ENCODE measurements at regions of chr7 and their contacts with region 1.

Region 1: DNA sequence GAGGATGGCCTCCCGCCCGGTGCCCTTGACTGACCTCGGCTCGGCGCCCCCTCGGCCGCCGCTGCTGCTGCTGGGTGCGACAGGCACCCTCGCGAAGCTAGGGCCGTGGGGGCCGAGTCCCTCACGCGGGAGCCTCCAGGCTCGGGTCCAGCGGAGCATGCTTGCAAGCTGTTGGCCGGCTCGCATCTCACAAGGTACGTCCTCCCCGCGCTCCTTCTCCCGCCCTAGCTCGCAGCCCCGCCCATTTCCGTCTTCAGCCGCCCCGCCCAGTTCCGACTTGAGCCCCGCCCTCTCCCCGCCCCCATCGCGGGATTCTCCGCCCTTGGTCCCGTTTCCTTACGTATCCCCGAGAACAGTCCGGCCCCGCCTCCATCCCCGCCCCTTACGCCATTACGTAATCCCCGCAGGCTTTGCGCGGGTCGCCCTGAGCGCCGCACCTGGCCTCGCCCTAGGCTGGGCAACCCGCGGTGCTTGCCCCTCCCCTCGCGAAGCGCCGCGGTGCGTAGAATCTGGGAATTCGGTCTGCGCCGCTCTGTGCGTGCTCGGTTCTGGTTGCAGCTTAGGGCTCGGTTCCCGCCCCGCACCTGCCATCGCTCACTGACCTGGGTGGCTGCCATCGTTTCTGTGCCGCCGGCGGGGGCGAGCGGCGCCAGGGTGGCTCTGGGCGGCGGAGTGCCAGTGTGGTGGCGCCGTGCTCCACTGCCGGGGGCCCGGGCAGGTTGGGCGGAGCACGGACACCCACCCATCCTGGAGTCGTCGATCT is at the start of gene ABHD11:
- DNase-seq: peak; percentile 95 to 99 (median 97)
- ATAC-seq: peak; percentile 95
- H3K4me3 ChIP-seq: peak within 1 kb of the TSS; percentile 84
- H3K4me3 Mint-ChIP-seq: peak within 1 kb of the TSS; percentile 83 to 94 (median 91)
- H3K27ac ChIP-seq: peak within 1 kb of the TSS; percentile 89
- H3K27ac Mint-ChIP-seq: peak within 1 kb of the TSS; percentile 79 to 96 (median 93)
- H3K4me1 ChIP-seq: peaks cover 4 to 18% of the 10 kb centered on the region in 2 donors
- H3K4me1 Mint-ChIP-seq: peaks cover 5 to 23% (median 16%) of the 10 kb centered on the region in 7 donors
- H3K27me3 ChIP-seq: no peaks in the 10 kb centered on the region
- H3K27me3 Mint-ChIP-seq: peaks cover 0 to 6% (median 0%) of the 10 kb centered on the region in 5 donors
- total RNA-seq, gene ABHD11: 12.3 to 22.7 (median 17.2) TPM

Region 2: DNA sequence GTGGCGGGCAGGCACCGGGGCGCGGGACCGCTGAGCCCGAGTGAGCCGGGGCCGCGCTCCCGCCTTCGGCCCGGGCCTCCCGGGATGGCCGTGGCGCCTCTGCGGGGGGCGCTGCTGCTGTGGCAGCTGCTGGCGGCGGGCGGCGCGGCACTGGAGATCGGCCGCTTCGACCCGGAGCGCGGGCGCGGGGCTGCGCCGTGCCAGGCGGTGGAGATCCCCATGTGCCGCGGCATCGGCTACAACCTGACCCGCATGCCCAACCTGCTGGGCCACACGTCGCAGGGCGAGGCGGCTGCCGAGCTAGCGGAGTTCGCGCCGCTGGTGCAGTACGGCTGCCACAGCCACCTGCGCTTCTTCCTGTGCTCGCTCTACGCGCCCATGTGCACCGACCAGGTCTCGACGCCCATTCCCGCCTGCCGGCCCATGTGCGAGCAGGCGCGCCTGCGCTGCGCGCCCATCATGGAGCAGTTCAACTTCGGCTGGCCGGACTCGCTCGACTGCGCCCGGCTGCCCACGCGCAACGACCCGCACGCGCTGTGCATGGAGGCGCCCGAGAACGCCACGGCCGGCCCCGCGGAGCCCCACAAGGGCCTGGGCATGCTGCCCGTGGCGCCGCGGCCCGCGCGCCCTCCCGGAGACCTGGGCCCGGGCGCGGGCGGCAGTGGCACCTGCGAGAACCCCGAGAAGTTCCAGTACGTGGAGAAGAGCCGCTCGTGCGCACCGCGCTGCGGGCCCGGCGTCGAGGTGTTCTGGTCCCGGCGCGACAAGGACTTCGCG is 304.7 kb before region 1 on chr7:
- CTCF ChIA-PET with region 1: no interaction called
- POLR2A ChIA-PET with region 1: no interaction called
- intact Hi-C with region 1: loop called in 1 of 2 experiments (anchors 2 kb)
- DNase-seq: peak in 1 of 9 donors; percentile 37
- ATAC-seq: peak; percentile 34
- H3K4me3 ChIP-seq: no peak overlapping the region
- H3K4me3 Mint-ChIP-seq: peak overlapping the region in 9 of 10 donors; percentile 28 to 78 (median 62)
- H3K27ac ChIP-seq: no peak overlapping the region
- H3K27ac Mint-ChIP-seq: no peak overlapping the region
- H3K4me1 ChIP-seq: no peaks in the 10 kb centered on the region
- H3K4me1 Mint-ChIP-seq: peaks cover 5 to 15% (median 10%) of the 10 kb centered on the region in 7 donors
- H3K27me3 ChIP-seq: no peaks in the 10 kb centered on the region
- H3K27me3 Mint-ChIP-seq: peaks cover 0 to 4% (median 0%) of the 10 kb centered on the region in 5 donors

Region 3: GRCh38 chr7:73578342-73579127 is 160.3 kb before region 1 on chr7 and contains the start of gene TBL2:
- CTCF ChIA-PET with region 1: interaction called, 3 read pairs
- POLR2A ChIA-PET with region 1: interaction called, 6 read pairs
- intact Hi-C with region 1: loop called (anchors 1 to 2 kb)
- DNase-seq: peak; percentile 98 to 99 (median 98)
- ATAC-seq: peak; percentile 94
- H3K4me3 ChIP-seq: peak within 1 kb of the TSS; percentile 61
- H3K4me3 Mint-ChIP-seq: peak within 1 kb of the TSS; percentile 91 to 98 (median 96)
- H3K27ac ChIP-seq: peak within 1 kb of the TSS; percentile 88
- H3K27ac Mint-ChIP-seq: peak within 1 kb of the TSS; percentile 97 to 99 (median 98)
- H3K4me1 ChIP-seq: peaks cover 13 to 14% of the 10 kb centered on the region in 2 donors
- H3K4me1 Mint-ChIP-seq: peaks cover 14 to 35% (median 31%) of the 10 kb centered on the region in 7 donors
- H3K27me3 ChIP-seq: no peaks in the 10 kb centered on the region
- H3K27me3 Mint-ChIP-seq: no peaks in the 10 kb centered on the region
- total RNA-seq, gene TBL2: 19.2 to 40.9 (median 32.8) TPM

Region 4: DNA sequence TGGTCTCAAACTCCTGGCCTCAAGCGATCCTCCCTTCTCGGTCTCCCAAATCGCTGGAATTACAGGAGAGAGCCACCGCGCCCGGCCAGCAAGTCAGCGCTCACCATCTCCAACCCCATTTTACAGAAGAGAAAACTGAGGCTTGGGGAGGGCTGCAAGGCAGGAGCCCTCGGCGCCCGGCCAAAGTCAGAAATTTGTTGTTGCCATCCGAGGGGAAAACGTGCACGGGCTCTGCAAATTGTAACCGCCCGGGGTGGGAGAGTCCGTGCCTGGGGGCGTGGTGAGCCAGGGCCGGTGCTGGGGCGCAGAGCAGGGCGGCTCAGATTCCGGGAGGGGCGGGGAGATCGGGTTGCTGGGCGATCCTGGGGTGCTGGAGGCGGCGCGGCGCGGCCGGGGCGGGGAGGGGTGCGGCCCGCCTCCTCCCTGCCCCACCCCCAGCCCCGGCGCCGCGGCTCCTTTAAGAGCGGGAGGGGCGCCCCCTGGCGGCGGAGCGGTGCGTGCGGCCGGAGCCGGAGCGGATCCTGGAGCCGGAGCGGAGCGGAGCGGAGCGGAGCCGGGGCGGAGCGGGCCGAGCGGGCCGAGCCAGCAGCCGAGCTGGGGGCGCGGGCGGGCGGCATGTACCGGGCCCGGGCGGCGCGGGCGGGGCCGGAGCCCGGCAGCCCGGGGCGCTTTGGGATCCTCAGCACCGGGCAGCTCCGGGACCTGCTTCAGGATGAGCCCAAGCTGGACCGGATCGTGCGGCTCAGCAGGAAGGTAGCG is 71.3 kb before region 1 on chr7 and contains the start of gene VPS37D:
- CTCF ChIA-PET with region 1: no interaction called
- POLR2A ChIA-PET with region 1: interaction called, 4 read pairs
- intact Hi-C with region 1: loop called (anchors 1 kb)
- DNase-seq: peak; percentile 84 to 99 (median 93)
- ATAC-seq: peak; percentile 98
- H3K4me3 ChIP-seq: peak within 1 kb of the TSS; percentile 44
- H3K4me3 Mint-ChIP-seq: peak within 1 kb of the TSS; percentile 61 to 84 (median 76)
- H3K27ac ChIP-seq: no peak within 1 kb of the TSS
- H3K27ac Mint-ChIP-seq: peak within 1 kb of the TSS in 5 of 9 donors; percentile 22 to 67 (median 49)
- H3K4me1 ChIP-seq: peaks cover 5 to 6% of the 10 kb centered on the region in 2 donors
- H3K4me1 Mint-ChIP-seq: peaks cover 0 to 15% (median 8%) of the 10 kb centered on the region in 7 donors
- H3K27me3 ChIP-seq: no peaks in the 10 kb centered on the region
- H3K27me3 Mint-ChIP-seq: peaks cover 27 to 58% (median 33%) of the 10 kb centered on the region in 5 donors
- total RNA-seq, gene VPS37D: 0.22 to 0.85 (median 0.44) TPM in 3 of 5 experiments, not detected in the others

Region 5: GRCh38 chr7:73792594-73793292 is 54.0 kb after region 1 on chr7:
- CTCF ChIA-PET with region 1: no interaction called
- POLR2A ChIA-PET with region 1: no interaction called
- intact Hi-C with region 1: no loop called
- DNase-seq: no peak
- ATAC-seq: no peak
- H3K4me3 ChIP-seq: no peak overlapping the region
- H3K4me3 Mint-ChIP-seq: no peak overlapping the region
- H3K27ac ChIP-seq: no peak overlapping the region
- H3K27ac Mint-ChIP-seq: no peak overlapping the region
- H3K4me1 ChIP-seq: no peaks in the 10 kb centered on the region
- H3K4me1 Mint-ChIP-seq: no peaks in the 10 kb centered on the region
- H3K27me3 ChIP-seq: no peaks in the 10 kb centered on the region
- H3K27me3 Mint-ChIP-seq: peaks cover 0 to 25% (median 9%) of the 10 kb centered on the region in 5 donors

Region 6: GRCh38 chr7:73842247-73842895 is 103.6 kb after region 1 on chr7 and contains the start of gene METTL27:
- CTCF ChIA-PET with region 1: no interaction called
- POLR2A ChIA-PET with region 1: interaction called, 6 read pairs
- intact Hi-C with region 1: loop called (anchors 1 kb)
- DNase-seq: peak; percentile 70 to 89 (median 87)
- ATAC-seq: peak; percentile 99
- H3K4me3 ChIP-seq: peak within 1 kb of the TSS; percentile 68
- H3K4me3 Mint-ChIP-seq: peak within 1 kb of the TSS; percentile 82 to 91 (median 89)
- H3K27ac ChIP-seq: peak within 1 kb of the TSS; percentile 73
- H3K27ac Mint-ChIP-seq: peak within 1 kb of the TSS; percentile 53 to 84 (median 77)
- H3K4me1 ChIP-seq: peaks cover 5 to 11% of the 10 kb centered on the region in 2 donors
- H3K4me1 Mint-ChIP-seq: peaks cover 0 to 19% (median 13%) of the 10 kb centered on the region in 7 donors
- H3K27me3 ChIP-seq: no peaks in the 10 kb centered on the region
- H3K27me3 Mint-ChIP-seq: peaks cover 0 to 12% (median 0%) of the 10 kb centered on the region in 5 donors
- total RNA-seq, gene METTL27: 1.8 to 7.4 (median 3.3) TPM

Region 7: DNA sequence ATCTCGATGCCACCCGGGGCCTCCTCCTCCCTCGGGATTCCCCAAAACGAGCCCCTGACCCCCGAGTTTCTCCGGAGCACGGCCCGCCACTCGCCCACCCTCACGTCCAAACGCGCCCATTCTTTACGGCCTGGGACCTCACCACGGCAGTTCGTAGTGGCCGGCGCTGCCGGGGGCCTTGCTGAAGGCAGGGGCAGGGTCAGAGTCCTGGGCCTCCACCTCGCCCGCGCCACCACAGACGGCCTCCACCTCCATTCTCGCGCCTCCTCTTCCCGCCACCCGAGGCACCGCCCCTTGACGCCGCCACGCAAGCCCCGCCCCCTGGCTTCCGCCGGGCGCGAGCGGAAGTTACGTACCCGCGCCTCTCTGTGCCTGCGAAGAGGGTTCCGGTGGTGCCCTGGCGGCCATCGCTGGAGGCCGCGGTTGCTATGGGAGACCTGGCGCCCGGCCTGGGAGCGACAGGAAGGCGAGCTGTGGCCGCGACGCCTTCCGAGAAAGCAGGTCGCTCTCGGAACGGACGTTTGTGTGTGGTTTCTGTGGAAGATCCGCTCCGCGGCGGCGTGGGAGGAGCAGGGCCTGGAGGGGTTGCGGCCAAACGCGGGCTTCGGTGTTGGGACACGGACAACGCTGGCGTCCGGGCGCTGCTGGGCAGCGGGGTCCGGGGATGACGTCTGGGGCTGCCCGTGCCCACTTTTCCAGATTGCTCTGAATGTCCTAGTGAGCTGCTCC is 515.5 kb after region 1 on chr7 and contains the start of gene RFC2:
- CTCF ChIA-PET with region 1: no interaction called
- POLR2A ChIA-PET with region 1: no interaction called
- intact Hi-C with region 1: loop called (anchors 1 to 10 kb)
- DNase-seq: peak; percentile 92 to 100 (median 98)
- ATAC-seq: peak; percentile 99
- H3K4me3 ChIP-seq: peak within 1 kb of the TSS; percentile 93
- H3K4me3 Mint-ChIP-seq: peak within 1 kb of the TSS; percentile 90 to 97 (median 94)
- H3K27ac ChIP-seq: peak within 1 kb of the TSS; percentile 90
- H3K27ac Mint-ChIP-seq: peak within 1 kb of the TSS; percentile 92 to 97 (median 95)
- H3K4me1 ChIP-seq: peaks cover 6 to 8% of the 10 kb centered on the region in 2 donors
- H3K4me1 Mint-ChIP-seq: peaks cover 0 to 37% (median 27%) of the 10 kb centered on the region in 7 donors
- H3K27me3 ChIP-seq: no peaks in the 10 kb centered on the region
- H3K27me3 Mint-ChIP-seq: no peaks in the 10 kb centered on the region
- total RNA-seq, gene RFC2: 12.0 to 51.7 (median 15.2) TPM

Measured in naive thymus-derived CD4-positive, alpha-beta T cell (primary cell).